ENCODE measurements at regions of chr15 and their contacts with region 1.

Region 1: DNA sequence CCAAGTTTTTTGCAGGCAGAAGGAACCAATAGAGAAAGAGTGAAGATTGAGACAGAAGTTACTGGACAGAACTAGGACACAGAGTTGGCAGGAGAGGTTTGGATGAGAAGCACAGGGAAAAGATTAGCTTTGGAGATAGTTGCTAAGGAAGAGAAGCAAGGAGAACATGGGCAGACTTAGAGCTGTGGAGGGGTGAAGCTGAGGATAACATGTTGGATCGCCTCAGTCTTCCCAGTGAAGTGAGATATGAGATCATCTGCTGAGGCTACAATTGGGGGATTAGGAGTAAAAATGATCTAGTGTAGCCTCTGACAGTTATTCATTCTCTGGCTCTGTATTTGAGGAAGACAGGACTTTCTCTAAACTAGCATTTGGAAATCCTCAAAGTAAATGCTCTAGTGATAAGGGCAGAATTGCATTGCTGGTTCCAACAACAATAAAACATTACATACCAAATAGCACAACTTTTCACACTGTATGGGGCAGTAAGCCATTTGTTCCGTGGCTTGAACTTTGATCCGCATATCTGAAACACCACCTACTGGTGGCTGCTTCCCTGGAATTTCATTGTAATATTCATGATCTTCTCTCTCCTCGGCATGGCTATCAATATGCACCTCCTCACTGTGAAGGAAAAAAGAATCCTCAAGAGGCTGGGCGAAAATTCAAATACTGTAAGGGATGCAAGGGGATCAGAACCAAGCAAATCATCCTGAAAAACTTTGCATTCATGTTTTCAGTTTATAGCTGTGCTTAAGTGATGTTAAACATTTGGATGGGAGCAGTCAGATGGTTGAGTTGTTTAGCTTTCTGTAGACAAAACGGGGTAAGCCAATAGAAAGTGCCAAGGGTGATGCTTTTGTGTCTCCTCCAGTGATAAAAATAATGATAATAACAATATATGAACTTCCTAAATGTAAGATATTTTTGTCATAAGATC is 22.2 kb upstream of the EID1 start:
- DNase-seq: no peak
- ATAC-seq: no peak
- H3K4me3 ChIP-seq: no peak overlapping the region
- H3K27ac ChIP-seq: no peak overlapping the region
- H3K4me1 ChIP-seq: no peaks in the 10 kb centered on the region
- H3K27me3 ChIP-seq: no peaks in the 10 kb centered on the region
- CTCF ChIP-seq: peak in 2 of 5 experiments; percentile 12 to 36
- POLR2A ChIP-seq: no peak

Region 2: GRCh38 chr15:48868536-48868935 is 12.8 kb after region 1 on chr15:
- in situ Hi-C with region 1: no loop called
- intact Hi-C with region 1: no loop called
- DNase-seq: no peak
- ATAC-seq: no peak
- H3K4me3 ChIP-seq: no peak overlapping the region
- H3K27ac ChIP-seq: no peak overlapping the region
- H3K4me1 ChIP-seq: no peaks in the 10 kb centered on the region
- H3K27me3 ChIP-seq: no peaks in the 10 kb centered on the region
- CTCF ChIP-seq: no peak
- POLR2A ChIP-seq: no peak

Region 3: DNA sequence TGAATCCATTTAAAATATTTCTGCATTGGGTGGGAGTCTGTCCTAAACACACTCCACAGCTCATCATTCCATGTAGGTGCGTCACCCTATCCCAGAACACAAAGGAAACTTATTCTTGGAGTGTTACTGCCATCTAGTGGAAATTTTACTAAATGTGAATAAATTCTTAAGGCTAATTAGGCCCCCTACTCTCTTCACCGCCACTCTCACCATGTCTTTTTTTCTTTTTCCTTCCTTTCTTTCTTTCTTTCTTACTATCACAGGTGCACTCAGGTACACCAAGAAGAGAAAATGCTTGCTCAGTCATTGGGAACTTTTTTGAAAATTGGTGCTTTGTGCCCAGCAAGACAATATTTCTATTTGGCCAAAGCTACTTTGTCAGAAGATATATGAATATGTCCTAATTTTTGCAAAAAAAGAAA is 1289.7 kb after region 1 on chr15:
- in situ Hi-C with region 1: loop called (anchors 5 to 25 kb)
- intact Hi-C with region 1: no loop called
- DNase-seq: no peak
- ATAC-seq: peak; percentile 65 to 76
- H3K4me3 ChIP-seq: no peak overlapping the region
- H3K27ac ChIP-seq: no peak overlapping the region
- H3K4me1 ChIP-seq: no peaks in the 10 kb centered on the region
- H3K27me3 ChIP-seq: no peaks in the 10 kb centered on the region
- CTCF ChIP-seq: peak; percentile 30 to 62 (median 60)
- POLR2A ChIP-seq: no peak